ENCODE measurements at regions of chr11 and their contacts with region 1.

Region 1: DNA sequence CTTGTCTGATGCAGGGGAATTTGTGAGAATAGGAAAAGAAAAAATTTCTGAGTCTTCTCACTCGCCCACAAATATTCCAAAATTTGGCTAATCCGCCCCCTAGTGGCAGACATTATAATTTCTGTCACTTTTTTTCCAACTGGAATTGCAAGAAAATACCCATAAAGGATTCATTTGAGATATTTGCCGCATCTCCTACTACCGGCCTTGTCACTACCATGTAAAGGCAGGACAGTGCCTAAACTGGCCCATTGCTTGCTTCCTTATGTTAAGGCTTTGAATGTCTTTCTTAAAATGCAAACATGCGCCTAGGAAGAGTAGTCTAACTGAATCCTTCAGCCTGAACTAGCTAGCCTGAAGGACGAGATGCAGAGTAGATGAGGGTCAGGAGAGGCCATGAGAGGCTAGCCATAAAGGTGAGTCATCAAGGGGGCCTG is 9.3 kb upstream of the CEP295 start:
- DNase-seq: peak in 2 of 3 donors; percentile 28 to 37
- H3K4me3 ChIP-seq: no peak overlapping the region
- H3K4me3 Mint-ChIP-seq: no peak overlapping the region
- H3K27ac ChIP-seq: no peak overlapping the region
- H3K27ac Mint-ChIP-seq: peak overlapping the region in 5 of 7 donors; percentile 1 to 32 (median 16)
- H3K4me1 ChIP-seq: peaks cover 36 to 40% of the 10 kb centered on the region in 2 donors
- H3K4me1 Mint-ChIP-seq: peaks cover 39% of the 10 kb centered on the region
- H3K27me3 ChIP-seq: peaks cover 0 to 3% of the 10 kb centered on the region in 2 donors
- H3K27me3 Mint-ChIP-seq: peaks cover 0 to 9% (median 2%) of the 10 kb centered on the region in 3 donors
- CTCF ChIP-seq: peak; percentile 94

Region 2: GRCh38 chr11:93234602-93235207 is 417.5 kb before region 1 on chr11:
- intact Hi-C with region 1: loop called (anchors 5 to 10 kb)
- DNase-seq: peak; percentile 53 to 70 (median 69)
- H3K4me3 ChIP-seq: no peak overlapping the region
- H3K4me3 Mint-ChIP-seq: no peak overlapping the region
- H3K27ac ChIP-seq: no peak overlapping the region
- H3K27ac Mint-ChIP-seq: no peak overlapping the region
- H3K4me1 ChIP-seq: no peaks in the 10 kb centered on the region
- H3K4me1 Mint-ChIP-seq: no peaks in the 10 kb centered on the region
- H3K27me3 ChIP-seq: peaks cover 0 to 2% of the 10 kb centered on the region in 2 donors
- H3K27me3 Mint-ChIP-seq: peaks cover 2 to 9% (median 4%) of the 10 kb centered on the region in 3 donors
- CTCF ChIP-seq: peak; percentile 94

Measured in CD14-positive monocyte (primary cell).